Activated B cell treated with CpG ODN at 0.5 μM for 24 hours (primary cell): ENCODE measurements at regions of chr15 and their contacts with region 1.

Region 1: DNA sequence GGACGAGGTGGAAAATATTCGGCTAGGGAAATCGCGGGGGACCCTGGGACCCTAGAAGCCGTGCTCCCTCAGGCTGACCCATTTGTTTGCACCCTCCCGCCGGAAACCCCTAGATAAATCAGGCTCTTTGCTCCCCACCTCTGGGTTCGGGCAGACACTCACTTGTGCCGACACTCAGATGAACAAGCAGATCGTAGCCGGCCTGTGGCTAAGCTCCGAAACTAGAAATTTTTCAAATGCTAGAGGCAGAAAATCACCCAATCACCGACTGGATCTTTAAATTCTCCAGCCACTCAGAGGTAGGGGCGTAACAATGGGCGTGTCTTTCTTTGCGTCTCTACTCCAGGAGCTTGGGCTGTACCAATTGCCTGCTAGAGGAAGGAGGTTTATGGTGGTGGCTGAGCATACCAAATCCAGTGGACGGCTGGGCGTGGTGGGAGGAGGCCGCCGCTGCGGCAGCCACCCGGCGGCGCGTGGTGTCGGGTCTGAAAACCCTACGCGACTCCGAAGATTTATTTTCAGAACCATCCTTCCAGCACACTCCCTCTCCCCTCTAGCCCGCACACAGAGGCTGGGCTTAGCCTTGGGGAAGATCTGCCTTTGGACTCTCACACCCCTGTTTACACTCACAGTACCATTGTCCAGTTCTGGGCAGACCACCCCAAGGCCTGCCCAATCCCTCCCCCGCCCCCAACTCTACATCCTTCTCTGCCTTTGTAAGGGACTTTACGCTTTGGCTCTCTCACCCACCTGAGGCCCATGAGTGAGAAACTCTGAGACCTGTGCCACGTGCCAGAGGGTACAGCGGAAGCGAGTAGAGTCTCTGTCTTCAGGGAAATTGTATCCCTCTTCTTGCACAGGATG is at the start of gene PIF1:
- DNase-seq: peak; percentile 60
- ATAC-seq: peak; percentile 94
- H3K4me3 Mint-ChIP-seq: peak within 1 kb of the TSS; percentile 84
- H3K27ac Mint-ChIP-seq: peak within 1 kb of the TSS; percentile 87
- H3K4me1 Mint-ChIP-seq: peaks cover 31% of the 10 kb centered on the region
- H3K27me3 Mint-ChIP-seq: no peaks in the 10 kb centered on the region
- CTCF ChIP-seq: no peak
- total RNA-seq, gene PIF1: 3.3 and 5.5 TPM in 2 replicates

Region 2: DNA sequence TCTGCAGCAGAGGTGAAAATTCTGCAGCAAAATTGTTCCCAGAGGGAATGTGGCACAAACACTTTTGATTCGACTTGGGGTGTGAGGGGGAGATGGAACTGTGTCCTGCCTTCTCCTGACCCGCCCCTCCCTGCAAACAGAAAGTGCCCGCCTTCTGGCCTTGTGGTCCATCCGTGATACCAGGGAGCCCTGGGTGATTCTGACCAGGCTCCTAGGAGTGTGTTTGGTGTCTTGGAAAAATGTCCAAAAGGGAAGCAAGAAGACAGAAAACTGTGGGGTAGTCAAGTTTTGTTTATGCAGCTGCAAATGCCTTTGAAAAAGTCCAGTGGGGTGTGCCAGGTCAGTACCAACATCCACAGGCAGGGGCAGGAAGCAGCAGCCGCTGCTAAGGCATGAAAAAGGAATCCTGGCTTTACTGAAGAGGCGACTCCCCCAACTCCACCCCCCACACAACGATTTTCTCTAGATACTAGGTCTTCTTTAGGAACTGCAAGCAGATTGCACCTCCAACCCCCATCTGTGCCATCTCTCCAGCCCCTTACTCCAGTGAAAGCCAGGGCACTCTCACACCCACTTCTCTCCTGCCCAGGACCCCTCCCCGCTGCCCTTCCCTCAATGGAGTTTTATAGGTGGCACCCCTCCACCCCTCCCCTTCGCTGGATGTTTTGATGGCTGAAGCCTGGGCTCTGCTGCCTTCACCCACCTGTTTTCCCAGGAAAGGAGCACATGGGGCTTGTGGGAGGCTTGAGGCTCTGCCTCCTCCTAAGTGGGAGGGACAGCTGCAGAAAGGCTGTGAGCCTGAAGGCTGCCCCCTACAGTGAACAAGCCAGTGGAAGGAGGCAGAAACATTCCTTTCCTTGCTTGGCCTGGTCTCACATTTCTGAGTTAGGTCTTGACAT is 909.5 kb before region 1 on chr15:
- CTCF ChIA-PET with region 1: no interaction called
- POLR2A ChIA-PET with region 1: no interaction called
- intact Hi-C with region 1: no loop called
- DNase-seq: no peak
- ATAC-seq: no peak
- H3K4me3 Mint-ChIP-seq: no peak overlapping the region
- H3K27ac Mint-ChIP-seq: no peak overlapping the region
- H3K4me1 Mint-ChIP-seq: peaks cover 8% of the 10 kb centered on the region
- H3K27me3 Mint-ChIP-seq: no peaks in the 10 kb centered on the region
- CTCF ChIP-seq: no peak

Region 3: DNA sequence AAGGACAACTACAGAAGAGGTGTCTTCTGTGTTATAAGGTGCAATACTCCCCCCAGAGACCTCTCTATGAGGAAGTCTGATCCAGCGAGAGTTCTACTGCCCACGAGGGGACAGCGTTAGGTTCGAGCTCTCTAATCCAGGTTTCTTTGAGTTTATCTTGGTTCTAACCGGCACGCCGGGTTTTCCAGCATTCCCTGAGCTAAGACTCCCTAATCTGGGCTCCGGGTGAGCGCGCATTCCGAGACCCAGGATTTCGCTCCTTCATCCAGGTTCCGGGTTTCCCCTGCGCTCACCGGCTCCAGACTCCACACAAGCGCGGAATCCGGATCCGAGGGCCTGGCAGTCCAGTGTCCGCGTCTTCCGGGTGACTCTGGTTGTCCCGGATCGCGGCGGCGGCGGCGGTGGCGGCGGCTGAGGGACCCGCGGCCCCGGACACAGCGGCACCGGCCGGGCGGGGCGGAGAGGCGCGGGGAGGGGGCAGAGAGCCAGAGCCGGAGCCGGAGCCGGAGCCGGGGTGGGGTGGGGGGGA is 365.4 kb before region 1 on chr15 and contains the start of gene ZNF609:
- CTCF ChIA-PET with region 1: no interaction called
- POLR2A ChIA-PET with region 1: no interaction called
- intact Hi-C with region 1: loop called (anchors 10 kb)
- DNase-seq: peak; percentile 89
- ATAC-seq: peak; percentile 86
- H3K4me3 Mint-ChIP-seq: peak within 1 kb of the TSS; percentile 92
- H3K27ac Mint-ChIP-seq: peak within 1 kb of the TSS; percentile 81
- H3K4me1 Mint-ChIP-seq: peaks cover 67% of the 10 kb centered on the region
- H3K27me3 Mint-ChIP-seq: no peaks in the 10 kb centered on the region
- CTCF ChIP-seq: no peak
- total RNA-seq, gene ZNF609: 25.9 and 28.6 TPM in 2 replicates

Region 4: GRCh38 chr15:64712353-64712752 is 113.3 kb before region 1 on chr15:
- CTCF ChIA-PET with region 1: no interaction called
- POLR2A ChIA-PET with region 1: interaction called, 13 read pairs
- intact Hi-C with region 1: no loop called
- DNase-seq: no peak
- ATAC-seq: no peak
- H3K4me3 Mint-ChIP-seq: no peak overlapping the region
- H3K27ac Mint-ChIP-seq: no peak overlapping the region
- H3K4me1 Mint-ChIP-seq: no peaks in the 10 kb centered on the region
- H3K27me3 Mint-ChIP-seq: peaks cover 2% of the 10 kb centered on the region
- CTCF ChIP-seq: no peak

Region 5: DNA sequence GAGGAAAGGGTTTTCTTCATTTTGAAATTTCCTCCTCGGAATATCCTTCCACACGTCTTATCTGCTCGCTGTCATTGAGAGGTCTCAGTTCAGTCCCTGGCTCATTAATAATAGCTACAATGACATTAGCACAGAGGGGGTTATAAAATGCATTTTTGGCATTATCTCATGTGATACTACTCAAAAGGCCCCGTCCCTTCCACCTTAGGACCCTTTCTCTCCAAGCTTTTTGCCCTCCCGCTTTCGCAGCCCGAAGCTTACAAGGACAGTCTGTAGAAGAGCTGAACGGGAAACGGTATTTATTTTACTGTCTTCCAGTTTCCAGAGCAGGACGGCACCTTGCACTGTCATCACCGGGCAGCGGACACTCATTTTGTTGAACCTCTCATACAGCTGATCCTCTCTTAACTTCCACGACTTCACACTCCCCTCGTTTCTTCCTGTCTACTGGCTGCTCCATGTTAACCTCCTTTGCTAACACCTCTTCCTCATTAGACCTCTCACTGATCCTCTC is 10.4 kb after region 1 on chr15:
- CTCF ChIA-PET with region 1: interaction called, 10 read pairs
- POLR2A ChIA-PET with region 1: interaction called, 14 read pairs
- intact Hi-C with region 1: loop called (anchors 1 kb)
- DNase-seq: no peak
- ATAC-seq: no peak
- H3K4me3 Mint-ChIP-seq: peak overlapping the region; percentile 60
- H3K27ac Mint-ChIP-seq: peak overlapping the region; percentile 50
- H3K4me1 Mint-ChIP-seq: peaks cover 23% of the 10 kb centered on the region
- H3K27me3 Mint-ChIP-seq: no peaks in the 10 kb centered on the region
- CTCF ChIP-seq: no peak

Region 6: GRCh38 chr15:64841258-64842095 is 15.8 kb after region 1 on chr15 and contains the start of gene PLEKHO2:
- CTCF ChIA-PET with region 1: interaction called, 6 read pairs
- POLR2A ChIA-PET with region 1: interaction called, 14 read pairs
- intact Hi-C with region 1: loop called (anchors 1 kb)
- DNase-seq: peak; percentile 78
- ATAC-seq: peak; percentile 75
- H3K4me3 Mint-ChIP-seq: peak within 1 kb of the TSS; percentile 95
- H3K27ac Mint-ChIP-seq: peak within 1 kb of the TSS; percentile 75
- H3K4me1 Mint-ChIP-seq: peaks cover 53% of the 10 kb centered on the region
- H3K27me3 Mint-ChIP-seq: no peaks in the 10 kb centered on the region
- CTCF ChIP-seq: no peak
- total RNA-seq, gene PLEKHO2: 36.5 and 38.1 TPM in 2 replicates

Region 7: DNA sequence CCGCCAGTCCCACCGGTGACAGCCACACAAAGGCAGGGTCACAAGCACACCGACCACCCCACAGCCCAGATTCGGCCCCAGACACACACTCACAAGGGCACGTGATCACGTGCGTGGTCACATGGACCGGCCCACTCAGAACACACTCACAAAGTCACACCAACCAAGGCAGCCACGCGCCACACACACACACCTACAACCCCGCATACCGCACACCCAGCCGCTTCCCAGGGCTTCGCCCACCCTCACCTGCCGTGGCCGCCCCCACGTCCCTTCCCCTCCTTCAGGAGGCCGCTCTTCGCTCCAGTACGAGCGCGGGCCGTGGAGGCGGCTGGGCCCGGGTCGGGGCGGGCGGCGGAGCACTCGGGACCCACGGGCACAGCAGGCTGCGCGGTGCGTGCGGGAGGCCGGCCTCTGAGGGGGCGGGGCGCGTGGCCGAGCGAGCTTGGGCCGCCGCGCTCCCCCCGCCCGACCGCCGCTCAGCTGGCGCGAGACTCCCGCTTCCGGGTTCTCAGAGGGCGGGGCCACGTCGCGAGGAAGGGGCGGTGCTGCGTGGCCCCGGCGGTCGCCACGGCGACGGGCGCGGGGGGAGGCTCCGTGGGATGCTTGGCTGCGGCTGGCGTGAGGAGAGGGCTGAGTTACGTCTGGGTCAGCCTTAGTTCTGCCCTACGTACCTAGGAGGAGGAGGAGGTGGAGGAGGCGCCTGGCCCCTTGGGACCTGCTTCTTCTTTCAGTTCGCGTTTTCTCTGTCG is 163.9 kb after region 1 on chr15 and contains the start of gene SPG21:
- CTCF ChIA-PET with region 1: no interaction called
- POLR2A ChIA-PET with region 1: interaction called, 4 read pairs
- intact Hi-C with region 1: loop called (anchors 5 kb)
- DNase-seq: peak; percentile 97
- ATAC-seq: peak; percentile 95
- H3K4me3 Mint-ChIP-seq: peak within 1 kb of the TSS; percentile 91
- H3K27ac Mint-ChIP-seq: peak within 1 kb of the TSS; percentile 86
- H3K4me1 Mint-ChIP-seq: peaks cover 48% of the 10 kb centered on the region
- H3K27me3 Mint-ChIP-seq: no peaks in the 10 kb centered on the region
- CTCF ChIP-seq: no peak
- total RNA-seq, gene SPG21: 74.7 and 75.7 TPM in 2 replicates

Region 8: DNA sequence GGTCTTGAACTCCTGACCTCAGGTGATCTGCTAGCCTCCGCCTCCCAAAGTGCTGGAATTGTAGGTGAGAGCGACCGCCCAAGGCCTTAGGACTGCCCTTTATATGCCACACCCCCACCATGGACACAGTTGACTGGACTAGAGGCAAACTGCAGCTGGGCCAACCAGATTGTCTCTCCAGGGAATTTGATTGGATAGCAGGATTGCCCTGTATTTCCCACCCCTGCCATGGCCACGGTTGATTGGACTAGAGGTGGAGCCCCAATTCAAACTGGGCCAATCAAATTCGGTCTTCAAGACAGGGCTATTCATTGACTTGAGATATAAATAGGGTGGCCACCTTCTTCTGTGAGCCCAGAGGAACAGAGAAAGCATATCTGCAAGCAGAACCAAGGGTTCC is 366.4 kb after region 1 on chr15:
- CTCF ChIA-PET with region 1: no interaction called
- POLR2A ChIA-PET with region 1: no interaction called
- intact Hi-C with region 1: no loop called
- DNase-seq: no peak
- ATAC-seq: no peak
- H3K4me3 Mint-ChIP-seq: no peak overlapping the region
- H3K27ac Mint-ChIP-seq: no peak overlapping the region
- H3K4me1 Mint-ChIP-seq: no peaks in the 10 kb centered on the region
- H3K27me3 Mint-ChIP-seq: no peaks in the 10 kb centered on the region
- CTCF ChIP-seq: no peak

Region 9: GRCh38 chr15:65286704-65287519 is 461.2 kb after region 1 on chr15 and contains the start of gene PARP16:
- CTCF ChIA-PET with region 1: no interaction called
- POLR2A ChIA-PET with region 1: no interaction called
- intact Hi-C with region 1: loop called (anchors 10 kb)
- DNase-seq: peak; percentile 94
- ATAC-seq: peak; percentile 96
- H3K4me3 Mint-ChIP-seq: peak within 1 kb of the TSS; percentile 85
- H3K27ac Mint-ChIP-seq: peak within 1 kb of the TSS; percentile 90
- H3K4me1 Mint-ChIP-seq: peaks cover 27% of the 10 kb centered on the region
- H3K27me3 Mint-ChIP-seq: no peaks in the 10 kb centered on the region
- CTCF ChIP-seq: no peak
- total RNA-seq, gene PARP16: 11.2 and 11.5 TPM in 2 replicates